RWPE1 (cell line): ENCODE measurements at regions of chr3 and their contacts with region 1.

Region 1: GRCh38 chr3:149771652-149772271 is 19.5 kb upstream of the COMMD2 start:
- DNase-seq: peak; percentile 57
- H3K27ac ChIP-seq: no peak overlapping the region
- CTCF ChIP-seq: peak; percentile 83

Region 2: GRCh38 chr3:149536429-149536828 is 235.3 kb before region 1 on chr3:
- CTCF ChIA-PET with region 1: no interaction called
- POLR2A ChIA-PET with region 1: no interaction called
- DNase-seq: no peak
- H3K27ac ChIP-seq: no peak overlapping the region
- CTCF ChIP-seq: no peak

Region 3: DNA sequence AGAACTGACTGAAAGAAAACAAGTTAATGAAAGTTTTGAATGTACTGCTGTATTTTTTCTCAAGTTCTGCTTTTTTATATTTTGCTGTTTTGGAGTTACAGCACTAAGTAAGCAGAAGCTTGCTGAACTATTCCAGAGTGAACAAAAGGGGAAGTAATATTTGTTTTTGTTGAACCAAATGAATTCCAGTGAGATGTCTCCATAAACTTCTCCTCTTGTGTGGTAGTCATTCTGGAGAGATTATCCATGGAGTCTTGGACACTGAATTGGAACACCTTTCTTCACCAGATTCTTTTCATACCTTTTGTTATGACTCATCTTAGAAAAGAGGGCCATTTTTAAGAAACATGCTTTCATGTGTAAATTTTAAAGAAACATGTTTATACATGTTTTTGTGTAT is 11.8 kb after region 1 on chr3:
- CTCF ChIA-PET with region 1: interaction called, 17 read pairs
- POLR2A ChIA-PET with region 1: no interaction called
- DNase-seq: peak; percentile 82
- H3K27ac ChIP-seq: no peak overlapping the region
- CTCF ChIP-seq: no peak

Region 4: GRCh38 chr3:149808209-149808829 is 36.6 kb after region 1 on chr3:
- CTCF ChIA-PET with region 1: interaction called, 45 read pairs
- POLR2A ChIA-PET with region 1: no interaction called
- DNase-seq: peak; percentile 68
- H3K27ac ChIP-seq: no peak overlapping the region
- CTCF ChIP-seq: peak; percentile 87